ENCODE measurements at regions of chr1 and their contacts with region 1.

Region 1: GRCh38 chr1:66996018-66996682 is 57.8 kb downstream of the SLC35D1 start:
- DNase-seq: peak; percentile 81
- ATAC-seq: peak; percentile 79
- H3K4me3 ChIP-seq: no peak overlapping the region
- H3K27ac ChIP-seq: no peak overlapping the region
- H3K4me1 ChIP-seq: no peaks in the 10 kb centered on the region
- H3K27me3 ChIP-seq: no peaks in the 10 kb centered on the region
- CTCF ChIP-seq: peak; percentile 93

Region 2: GRCh38 chr1:66764994-66765578 is 231.1 kb before region 1 on chr1:
- CTCF ChIA-PET with region 1: no interaction called
- POLR2A ChIA-PET with region 1: no interaction called
- intact Hi-C with region 1: loop called (anchors 1 kb)
- DNase-seq: peak; percentile 65
- ATAC-seq: peak; percentile 66
- H3K4me3 ChIP-seq: no peak overlapping the region
- H3K27ac ChIP-seq: no peak overlapping the region
- H3K4me1 ChIP-seq: no peaks in the 10 kb centered on the region
- H3K27me3 ChIP-seq: no peaks in the 10 kb centered on the region
- CTCF ChIP-seq: peak; percentile 92

Region 3: GRCh38 chr1:67053785-67054772 is 57.9 kb after region 1 on chr1 and contains the start of gene SLC35D1:
- CTCF ChIA-PET with region 1: no interaction called
- POLR2A ChIA-PET with region 1: no interaction called
- intact Hi-C with region 1: loop called (anchors 5 kb)
- DNase-seq: peak; percentile 54
- ATAC-seq: peak; percentile 64
- H3K4me3 ChIP-seq: peak within 1 kb of the TSS; percentile 92
- H3K27ac ChIP-seq: peak within 1 kb of the TSS; percentile 68
- H3K4me1 ChIP-seq: peaks cover 23% of the 10 kb centered on the region
- H3K27me3 ChIP-seq: no peaks in the 10 kb centered on the region
- CTCF ChIP-seq: no peak
- total RNA-seq, gene SLC35D1: 5.3 and 6.1 TPM in 2 replicates

Region 4: GRCh38 chr1:67214420-67215174 is 218.4 kb after region 1 on chr1:
- CTCF ChIA-PET with region 1: no interaction called
- POLR2A ChIA-PET with region 1: interaction called, 4 read pairs
- intact Hi-C with region 1: loop called (anchors 1 kb)
- DNase-seq: peak; percentile 68
- ATAC-seq: peak; percentile 60
- H3K4me3 ChIP-seq: no peak overlapping the region
- H3K27ac ChIP-seq: no peak overlapping the region
- H3K4me1 ChIP-seq: no peaks in the 10 kb centered on the region
- H3K27me3 ChIP-seq: no peaks in the 10 kb centered on the region
- CTCF ChIP-seq: peak; percentile 79